T-cell (primary cell): ENCODE measurements at regions of chr3 and their contacts with region 1.

Region 1: GRCh38 chr3:32374788-32375595 is 16.7 kb upstream of the CMTM7 start:
- DNase-seq: peak in 32 of 35 experiments; percentile 31 to 90 (median 60)
- ATAC-seq: peak in 2 of 4 experiments; percentile 25 to 32
- H3K4me3 ChIP-seq: no peak overlapping the region
- H3K4me3 Mint-ChIP-seq: peak overlapping the region in 1 of 3 donors; percentile 32
- H3K27ac ChIP-seq: no peak overlapping the region
- H3K27ac Mint-ChIP-seq: peak overlapping the region; percentile 78 to 85
- H3K4me1 ChIP-seq: peaks cover 29 to 33% of the 10 kb centered on the region in 2 experiments
- H3K4me1 Mint-ChIP-seq: peaks cover 39 to 41% (median 41%) of the 10 kb centered on the region in 3 donors
- H3K27me3 ChIP-seq: no peaks in the 10 kb centered on the region
- H3K27me3 Mint-ChIP-seq: no peaks in the 10 kb centered on the region

Region 2: DNA sequence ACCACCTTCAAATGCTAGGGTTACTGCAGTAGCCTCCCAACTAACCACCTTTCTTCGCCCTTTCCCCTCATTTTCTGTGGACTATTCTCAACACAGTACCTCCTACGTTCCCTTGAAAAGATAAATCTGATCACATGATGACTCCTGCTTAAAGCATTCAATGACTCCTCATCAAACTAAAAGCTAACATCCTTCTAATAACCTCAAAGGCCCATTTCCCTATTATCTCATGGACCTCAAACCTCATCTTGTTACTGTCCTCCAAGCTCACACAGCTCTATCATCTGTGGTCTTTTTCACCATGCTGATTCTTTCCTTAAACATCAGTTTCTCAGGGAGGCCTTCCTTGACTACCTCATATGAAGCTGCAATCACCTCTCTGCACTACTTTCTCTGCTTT is 1510.2 kb before region 1 on chr3:
- CTCF ChIA-PET with region 1: no interaction called
- POLR2A ChIA-PET with region 1: no interaction called
- DNase-seq: no peak
- ATAC-seq: no peak
- H3K4me3 ChIP-seq: no peak overlapping the region
- H3K4me3 Mint-ChIP-seq: no peak overlapping the region
- H3K27ac ChIP-seq: no peak overlapping the region
- H3K27ac Mint-ChIP-seq: no peak overlapping the region
- H3K4me1 ChIP-seq: no peaks in the 10 kb centered on the region
- H3K4me1 Mint-ChIP-seq: no peaks in the 10 kb centered on the region
- H3K27me3 ChIP-seq: no peaks in the 10 kb centered on the region
- H3K27me3 Mint-ChIP-seq: peaks cover 0 to 4% of the 10 kb centered on the region in 2 donors

Region 3: GRCh38 chr3:32401556-32402081 is 26.6 kb after region 1 on chr3:
- CTCF ChIA-PET with region 1: interaction called, 10 to 13 read pairs
- POLR2A ChIA-PET with region 1: interaction called in 1 of 2 experiments, 10 read pairs
- DNase-seq: peak in 34 of 35 experiments; percentile 41 to 76 (median 57)
- ATAC-seq: peak; percentile 74 to 88 (median 84)
- H3K4me3 ChIP-seq: peak overlapping the region; percentile 47 to 64
- H3K4me3 Mint-ChIP-seq: peak overlapping the region; percentile 87 to 88 (median 88)
- H3K27ac ChIP-seq: peak overlapping the region; percentile 85
- H3K27ac Mint-ChIP-seq: peak overlapping the region; percentile 100
- H3K4me1 ChIP-seq: peaks cover 24 to 58% of the 10 kb centered on the region in 2 experiments
- H3K4me1 Mint-ChIP-seq: peaks cover 79 to 83% (median 81%) of the 10 kb centered on the region in 3 donors
- H3K27me3 ChIP-seq: no peaks in the 10 kb centered on the region
- H3K27me3 Mint-ChIP-seq: no peaks in the 10 kb centered on the region

Region 4: GRCh38 chr3:32500880-32501782 is 126.1 kb after region 1 on chr3:
- CTCF ChIA-PET with region 1: interaction called in 1 of 2 experiments, 5 read pairs
- POLR2A ChIA-PET with region 1: interaction called in 1 of 2 experiments, 10 read pairs
- DNase-seq: no peak
- ATAC-seq: no peak
- H3K4me3 ChIP-seq: peak overlapping the region in 1 of 2 donors; percentile 99
- H3K4me3 Mint-ChIP-seq: peak overlapping the region; percentile 96 to 99 (median 99)
- H3K27ac ChIP-seq: peak overlapping the region; percentile 95
- H3K27ac Mint-ChIP-seq: peak overlapping the region; percentile 93 to 96
- H3K4me1 ChIP-seq: peaks cover 11 to 13% of the 10 kb centered on the region in 2 experiments
- H3K4me1 Mint-ChIP-seq: peaks cover 49 to 57% (median 56%) of the 10 kb centered on the region in 3 donors
- H3K27me3 ChIP-seq: no peaks in the 10 kb centered on the region
- H3K27me3 Mint-ChIP-seq: no peaks in the 10 kb centered on the region